ENCODE measurements at regions of chr4 and their contacts with region 1.

Region 1: DNA sequence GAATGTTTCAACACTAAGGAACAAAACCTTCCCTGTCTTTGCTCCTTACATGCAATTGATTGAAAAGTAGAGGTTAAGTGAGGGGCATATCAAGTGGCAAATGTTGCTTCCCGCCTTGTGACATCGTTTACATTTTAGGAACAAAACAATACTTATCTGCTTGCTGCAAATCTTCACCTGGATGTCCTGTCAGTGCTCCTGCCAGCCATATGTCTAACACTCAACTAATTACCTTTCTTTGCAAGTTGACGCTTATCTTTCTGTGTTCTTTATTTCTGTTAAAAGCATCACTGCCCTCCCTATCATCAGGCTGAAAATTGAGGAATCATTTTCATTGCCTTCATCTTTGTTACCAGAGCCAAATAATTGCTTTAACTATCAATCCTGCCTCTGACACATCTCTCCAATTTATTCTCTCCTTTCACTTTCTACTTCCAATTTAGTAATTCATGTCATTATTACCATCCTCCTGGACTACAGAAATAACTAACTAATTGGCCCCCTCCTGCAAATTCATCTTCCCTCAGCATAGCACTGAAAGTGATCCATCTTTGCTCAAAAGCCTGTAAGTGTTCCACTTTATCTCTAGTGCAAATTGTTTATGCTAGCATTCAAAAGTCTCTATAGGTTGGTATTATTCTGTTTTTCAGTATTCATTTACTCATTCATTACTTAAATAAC is 298.7 kb upstream of the ATOH1 start:
- DNase-seq: no peak
- H3K4me3 ChIP-seq: no peak overlapping the region
- H3K27ac ChIP-seq: no peak overlapping the region
- H3K4me1 ChIP-seq: peaks cover 5% of the 10 kb centered on the region
- H3K27me3 ChIP-seq: no peaks in the 10 kb centered on the region
- CTCF ChIP-seq: no peak

Region 2: DNA sequence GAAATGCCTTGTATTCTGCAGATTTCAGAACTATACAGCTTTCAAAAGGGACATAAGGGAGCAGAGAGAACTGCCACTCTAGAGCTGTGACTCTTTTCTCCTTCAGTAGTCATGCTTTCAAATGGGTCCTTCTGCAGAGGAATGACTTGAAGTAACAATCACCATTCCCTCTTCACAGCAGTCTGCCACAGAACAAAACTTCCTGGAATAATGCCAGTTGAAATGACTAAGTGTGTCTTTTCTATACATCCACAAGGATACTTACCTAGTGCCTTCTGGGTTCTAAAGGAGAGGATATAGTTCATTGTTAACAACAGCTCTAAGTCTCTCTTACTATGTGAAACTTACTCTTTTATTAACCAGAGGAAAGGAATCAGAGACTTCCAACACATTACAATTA is 216.6 kb before region 1 on chr4:
- CTCF ChIA-PET with region 1: no interaction called
- POLR2A ChIA-PET with region 1: no interaction called
- intact Hi-C with region 1: loop called (anchors 10 kb)
- DNase-seq: peak; percentile 46
- H3K4me3 ChIP-seq: no peak overlapping the region
- H3K27ac ChIP-seq: no peak overlapping the region
- H3K4me1 ChIP-seq: peaks cover 23% of the 10 kb centered on the region
- H3K27me3 ChIP-seq: no peaks in the 10 kb centered on the region
- CTCF ChIP-seq: no peak